Activated CD4-positive, alpha-beta memory T cell treated with anti-CD3 and anti-CD28 coated beads for 36 hours (primary cell): ENCODE measurements at regions of chr18 and their contacts with region 1.

Region 1: DNA sequence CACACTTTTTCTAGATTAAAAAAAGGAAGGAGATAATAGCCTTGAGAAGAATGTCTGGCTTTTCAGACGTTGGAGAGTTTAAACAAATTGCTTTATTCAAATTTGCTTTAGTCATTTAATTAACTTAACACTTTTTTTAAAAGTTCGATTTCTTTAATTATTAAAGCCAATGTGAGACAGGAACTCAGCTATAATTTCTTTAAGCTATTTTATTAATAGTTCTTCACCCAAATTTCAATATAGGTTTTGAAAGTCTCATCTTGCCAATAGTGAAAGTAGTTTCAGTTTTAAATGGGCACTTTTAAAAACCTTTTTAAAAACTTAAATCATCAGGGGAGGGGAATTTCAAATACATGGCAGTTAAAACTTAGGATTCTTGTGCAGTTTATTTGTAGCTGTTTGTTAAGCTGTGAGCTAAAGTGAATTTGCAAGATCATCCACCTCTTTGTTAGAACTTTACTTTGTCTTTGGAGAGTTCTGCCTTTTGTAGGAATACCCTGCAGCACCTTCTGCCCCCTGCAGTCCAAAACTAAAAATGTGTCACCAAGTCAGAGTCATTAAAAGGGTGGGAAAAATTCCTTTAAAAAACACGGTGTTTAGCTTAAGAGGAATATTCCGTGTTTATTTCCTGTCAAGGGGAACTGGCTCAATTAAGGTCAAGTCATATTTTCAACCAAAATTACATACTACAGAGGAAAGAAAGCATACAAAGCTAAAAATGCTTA is 4.6 kb downstream of the TGIF1 start:
- DNase-seq: no peak
- H3K4me3 Mint-ChIP-seq: peak overlapping the region; percentile 86
- H3K27ac Mint-ChIP-seq: peak overlapping the region; percentile 100
- H3K4me1 Mint-ChIP-seq: peaks cover 62% of the 10 kb centered on the region
- H3K27me3 Mint-ChIP-seq: no peaks in the 10 kb centered on the region

Region 2: GRCh38 chr18:3051718-3052410 is 402.7 kb before region 1 on chr18:
- CTCF ChIA-PET with region 1: no interaction called
- POLR2A ChIA-PET with region 1: no interaction called
- intact Hi-C with region 1: no loop called
- DNase-seq: no peak
- H3K4me3 Mint-ChIP-seq: no peak overlapping the region
- H3K27ac Mint-ChIP-seq: peak overlapping the region; percentile 44
- H3K4me1 Mint-ChIP-seq: peaks cover 28% of the 10 kb centered on the region
- H3K27me3 Mint-ChIP-seq: no peaks in the 10 kb centered on the region

Region 3: DNA sequence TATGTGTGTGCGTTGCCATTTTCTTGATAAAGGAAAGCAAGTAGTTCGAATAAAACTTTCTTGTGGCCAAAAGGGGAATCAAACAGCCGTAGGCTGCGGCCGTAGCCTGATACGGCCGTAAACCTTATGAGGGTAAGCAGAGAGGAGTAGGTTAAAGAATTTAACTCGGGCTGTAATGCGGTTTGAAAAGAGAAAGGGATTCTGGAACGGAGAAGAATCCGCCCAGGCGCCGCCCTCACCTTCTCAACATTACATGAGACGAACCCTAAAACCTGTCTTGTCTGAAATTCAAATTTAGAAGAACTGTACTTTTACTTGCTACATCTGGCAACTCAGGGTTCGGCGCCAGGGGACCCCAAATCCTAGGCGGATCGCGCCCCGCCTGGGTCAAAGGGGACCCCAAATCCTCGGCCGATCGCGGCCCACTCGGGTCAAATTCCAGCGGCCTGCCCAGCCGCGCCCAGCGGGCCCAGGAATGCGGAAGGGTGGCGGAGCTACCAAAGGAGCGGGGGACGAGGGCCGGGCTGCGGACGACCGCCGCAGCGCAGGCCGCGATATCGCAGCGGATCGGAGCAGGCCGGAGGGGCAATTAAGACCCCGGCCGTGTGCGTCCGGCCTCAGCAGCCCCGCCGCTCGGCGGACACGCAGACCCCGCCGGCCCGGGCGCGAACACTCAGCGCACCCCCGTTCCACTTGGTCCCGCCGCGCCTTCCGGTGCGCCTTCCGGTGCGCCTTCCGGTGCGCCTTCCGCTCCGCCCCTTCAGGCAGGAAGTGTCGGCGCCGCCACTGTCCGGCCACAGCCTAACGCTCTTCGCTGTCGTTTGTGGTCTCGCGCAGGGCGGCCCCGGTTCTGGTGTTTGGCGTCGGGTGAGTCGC is 192.9 kb before region 1 on chr18 and contains the start of gene MYL12B:
- CTCF ChIA-PET with region 1: interaction called, 3 read pairs
- POLR2A ChIA-PET with region 1: no interaction called
- intact Hi-C with region 1: loop called (anchors 1 kb)
- DNase-seq: peak; percentile 85
- H3K4me3 Mint-ChIP-seq: peak within 1 kb of the TSS; percentile 89
- H3K27ac Mint-ChIP-seq: peak within 1 kb of the TSS; percentile 95
- H3K4me1 Mint-ChIP-seq: peaks cover 62% of the 10 kb centered on the region
- H3K27me3 Mint-ChIP-seq: no peaks in the 10 kb centered on the region
- total RNA-seq, gene MYL12B: 335 to 339 TPM

Region 4: GRCh38 chr18:3297025-3297984 is 157.2 kb before region 1 on chr18:
- CTCF ChIA-PET with region 1: interaction called, 24 read pairs
- POLR2A ChIA-PET with region 1: interaction called, 4 read pairs
- intact Hi-C with region 1: no loop called
- DNase-seq: peak; percentile 97
- H3K4me3 Mint-ChIP-seq: peak overlapping the region; percentile 87
- H3K27ac Mint-ChIP-seq: peak overlapping the region; percentile 52
- H3K4me1 Mint-ChIP-seq: peaks cover 8% of the 10 kb centered on the region
- H3K27me3 Mint-ChIP-seq: peaks cover 17% of the 10 kb centered on the region

Region 5: GRCh38 chr18:3380384-3380961 is 74.1 kb before region 1 on chr18:
- CTCF ChIA-PET with region 1: interaction called, 33 read pairs
- POLR2A ChIA-PET with region 1: interaction called, 4 read pairs
- intact Hi-C with region 1: no loop called
- DNase-seq: peak; percentile 57
- H3K4me3 Mint-ChIP-seq: no peak overlapping the region
- H3K27ac Mint-ChIP-seq: no peak overlapping the region
- H3K4me1 Mint-ChIP-seq: peaks cover 9% of the 10 kb centered on the region
- H3K27me3 Mint-ChIP-seq: peaks cover 13% of the 10 kb centered on the region

Region 6: GRCh38 chr18:3402982-3403451 is 51.5 kb before region 1 on chr18:
- CTCF ChIA-PET with region 1: no interaction called
- POLR2A ChIA-PET with region 1: no interaction called
- intact Hi-C with region 1: no loop called
- DNase-seq: no peak
- H3K4me3 Mint-ChIP-seq: no peak overlapping the region
- H3K27ac Mint-ChIP-seq: no peak overlapping the region
- H3K4me1 Mint-ChIP-seq: peaks cover 17% of the 10 kb centered on the region
- H3K27me3 Mint-ChIP-seq: peaks cover 2% of the 10 kb centered on the region

Region 7: DNA sequence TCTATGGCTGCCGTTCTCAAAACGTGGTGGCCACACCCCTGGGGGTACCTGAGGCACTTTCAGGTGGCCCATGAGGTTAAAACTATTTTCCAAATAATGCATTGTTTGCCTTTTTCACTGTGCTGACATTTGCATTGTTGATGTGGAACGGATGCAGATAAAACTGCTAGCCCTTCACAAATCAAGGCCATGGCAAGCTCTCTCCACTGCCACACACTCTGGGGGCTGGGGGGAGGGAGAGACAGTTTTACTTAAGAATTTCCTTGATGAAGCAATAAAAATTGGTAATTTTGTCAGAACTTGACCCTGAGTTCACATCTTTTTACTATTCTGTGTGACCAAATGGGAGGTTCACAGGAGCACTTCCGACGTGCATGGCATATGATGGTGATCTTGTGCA is 26.6 kb before region 1 on chr18:
- CTCF ChIA-PET with region 1: no interaction called
- POLR2A ChIA-PET with region 1: no interaction called
- intact Hi-C with region 1: no loop called
- DNase-seq: no peak
- H3K4me3 Mint-ChIP-seq: no peak overlapping the region
- H3K27ac Mint-ChIP-seq: no peak overlapping the region
- H3K4me1 Mint-ChIP-seq: no peaks in the 10 kb centered on the region
- H3K27me3 Mint-ChIP-seq: no peaks in the 10 kb centered on the region

Region 8: DNA sequence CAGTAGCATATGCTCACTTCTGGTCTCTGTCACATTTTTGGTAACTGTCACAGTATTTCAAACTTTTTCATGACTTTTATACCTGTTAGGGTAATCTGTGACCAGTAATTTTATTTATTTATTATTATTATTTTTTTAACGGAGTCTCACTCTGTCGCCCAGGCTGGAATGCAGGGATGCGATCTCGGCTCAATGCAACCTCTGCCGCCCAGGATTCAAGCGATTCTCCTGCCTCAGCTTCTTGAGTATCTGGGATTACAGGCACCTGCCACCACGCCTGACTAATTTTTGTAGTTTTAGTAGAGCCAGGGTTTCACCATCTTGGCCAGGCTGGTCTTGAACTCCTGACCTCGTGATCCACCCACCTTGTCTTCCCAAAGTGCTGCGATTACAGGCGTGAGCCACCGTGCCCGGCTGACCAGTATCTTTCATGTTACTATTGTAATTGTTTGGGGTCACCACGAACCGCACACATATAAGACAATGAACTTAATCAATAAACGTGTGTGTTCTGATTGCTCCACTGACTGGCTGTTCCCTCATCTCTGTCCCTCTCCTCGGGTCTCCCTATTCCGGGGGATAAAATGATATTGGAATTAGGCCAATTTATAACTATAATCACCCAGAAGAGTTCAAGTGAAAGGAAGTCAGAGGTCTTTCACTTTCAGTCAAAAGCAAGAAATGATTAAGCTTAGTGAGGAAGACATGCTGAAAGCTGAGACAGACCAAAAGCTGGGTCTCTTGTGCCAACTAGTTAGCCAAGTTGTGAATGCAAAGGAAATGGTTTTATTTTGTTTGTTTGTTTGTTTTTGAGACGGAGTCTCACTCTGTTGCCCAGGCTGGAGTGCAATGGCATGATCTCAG is 18.4 kb after region 1 on chr18:
- CTCF ChIA-PET with region 1: interaction called, 14 read pairs
- POLR2A ChIA-PET with region 1: interaction called, 6 read pairs
- intact Hi-C with region 1: loop called (anchors 1 kb)
- DNase-seq: peak; percentile 41
- H3K4me3 Mint-ChIP-seq: peak overlapping the region; percentile 23
- H3K27ac Mint-ChIP-seq: peak overlapping the region; percentile 8
- H3K4me1 Mint-ChIP-seq: peaks cover 17% of the 10 kb centered on the region
- H3K27me3 Mint-ChIP-seq: peaks cover 5% of the 10 kb centered on the region

Region 9: GRCh38 chr18:3541549-3542386 is 87.2 kb after region 1 on chr18:
- CTCF ChIA-PET with region 1: interaction called, 6 read pairs
- POLR2A ChIA-PET with region 1: interaction called, 4 read pairs
- intact Hi-C with region 1: loop called (anchors 1 kb)
- DNase-seq: peak; percentile 68
- H3K4me3 Mint-ChIP-seq: peak overlapping the region; percentile 8
- H3K27ac Mint-ChIP-seq: peak overlapping the region; percentile 59
- H3K4me1 Mint-ChIP-seq: peaks cover 35% of the 10 kb centered on the region
- H3K27me3 Mint-ChIP-seq: no peaks in the 10 kb centered on the region